Left ventricle myocardium superior (tissue), 1 donor: ENCODE measurements at regions of chr5 and their contacts with region 1.

Region 1: DNA sequence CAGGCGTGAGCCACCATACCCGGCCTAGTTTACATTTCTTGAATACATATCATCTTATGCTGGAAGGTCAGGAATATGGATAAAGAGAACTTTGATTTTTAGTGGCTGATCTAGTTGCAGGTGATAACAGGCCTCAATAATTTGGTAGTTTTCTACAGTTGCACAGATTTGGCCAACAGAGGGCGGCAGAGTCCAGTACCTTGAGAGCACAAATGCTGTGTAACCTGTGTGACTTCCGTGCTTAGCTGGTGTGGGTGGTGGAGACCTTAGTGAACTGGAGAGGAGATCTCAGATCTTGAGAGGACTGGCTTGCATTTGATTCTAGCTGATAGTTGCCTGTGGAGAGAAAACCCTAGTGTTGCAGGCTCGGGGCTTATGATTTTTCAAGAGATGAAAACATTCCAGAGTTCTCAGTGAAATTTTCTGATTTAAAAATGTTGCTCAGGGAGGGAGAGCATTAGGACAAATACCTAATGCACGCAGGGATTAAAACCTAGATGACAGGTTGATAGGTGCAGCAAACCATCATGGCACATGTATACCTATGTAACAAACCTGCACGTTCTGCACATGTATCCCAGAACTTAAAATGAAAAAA is 17.4 kb upstream of the GPR151 start:
- DNase-seq: peak; percentile 54
- ATAC-seq: peak; percentile 60

Region 2: DNA sequence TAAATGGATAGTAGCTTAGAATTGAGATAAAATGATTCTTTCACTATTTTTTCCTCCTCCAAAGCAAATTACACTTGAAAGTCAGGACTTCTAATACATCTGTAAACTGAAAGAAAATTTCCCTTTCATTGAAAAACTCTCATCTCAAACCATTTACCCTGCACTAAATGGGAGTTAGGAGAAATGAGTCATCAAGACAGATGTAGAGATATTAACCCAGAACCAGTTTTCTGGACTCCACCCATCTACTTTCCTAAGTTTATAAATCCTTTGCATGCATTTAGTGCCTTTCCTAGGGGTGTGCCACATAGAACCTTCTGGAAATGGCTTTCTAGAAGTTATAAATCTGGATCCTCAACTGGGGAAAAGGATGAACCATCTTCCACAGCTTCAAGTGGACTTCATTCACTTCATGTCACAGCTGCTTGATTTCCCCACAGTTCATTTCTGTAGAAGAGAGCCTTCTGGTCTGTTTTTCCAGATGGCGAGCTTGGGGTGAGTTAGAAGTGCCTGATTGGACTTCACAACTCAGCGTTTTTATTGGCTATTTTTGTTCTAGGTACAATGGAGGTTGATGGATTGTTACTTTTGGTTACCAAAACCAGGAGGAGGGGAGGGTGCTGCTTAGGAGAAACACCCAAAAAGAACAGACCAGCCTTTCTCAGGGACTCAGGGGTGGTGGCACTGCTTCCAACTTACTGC is 55.1 kb after region 1 on chr5:
- intact Hi-C with region 1: no loop called
- DNase-seq: no peak
- ATAC-seq: no peak

Region 3: GRCh38 chr5:146971401-146971800 is 438.0 kb after region 1 on chr5:
- intact Hi-C with region 1: loop called (anchors 5 kb)
- DNase-seq: no peak
- ATAC-seq: no peak